GM12878 (cell line): ENCODE measurements at regions of chrX and their contacts with region 1.

Region 1: GRCh38 chrX:55160685-55161552 is 59.2 kb upstream of the PAGE5 start:
- DNase-seq: peak; percentile 64
- ATAC-seq: peak; percentile 96
- H3K4me3 ChIP-seq: peak overlapping the region; percentile 60
- H3K27ac ChIP-seq: peak overlapping the region; percentile 78
- H3K4me1 ChIP-seq: no peaks in the 10 kb centered on the region
- H3K27me3 ChIP-seq: no peaks in the 10 kb centered on the region
- CTCF ChIP-seq: peak; percentile 57 to 65 (median 63)
- EP300 ChIP-seq: no peak
- POLR2A ChIP-seq: peak; percentile 84
- RAD21 ChIP-seq: peak; percentile 66

Region 2: GRCh38 chrX:54999717-55000598 is 161.0 kb before region 1 on chrX and contains the start of gene APEX2:
- CTCF ChIA-PET with region 1: interaction called, 3 read pairs
- POLR2A ChIA-PET with region 1: no interaction called
- RAD21 ChIA-PET with region 1: no interaction called
- SMC1A ChIA-PET with region 1: no interaction called
- in situ Hi-C with region 1: no loop called
- intact Hi-C with region 1: loop called (anchors 5 kb)
- DNase-seq: peak; percentile 61
- ATAC-seq: peak; percentile 95
- H3K4me3 ChIP-seq: peak within 1 kb of the TSS; percentile 59
- H3K27ac ChIP-seq: peak within 1 kb of the TSS; percentile 95
- H3K4me1 ChIP-seq: no peaks in the 10 kb centered on the region; the same call in 1 of the 2 replicates
- H3K27me3 ChIP-seq: no peaks in the 10 kb centered on the region
- CTCF ChIP-seq: no peak
- EP300 ChIP-seq: no peak
- POLR2A ChIP-seq: peak; percentile 87
- RAD21 ChIP-seq: no peak
- polyA plus RNA-seq, gene APEX2: 18.9 to 20.4 TPM

Region 3: DNA sequence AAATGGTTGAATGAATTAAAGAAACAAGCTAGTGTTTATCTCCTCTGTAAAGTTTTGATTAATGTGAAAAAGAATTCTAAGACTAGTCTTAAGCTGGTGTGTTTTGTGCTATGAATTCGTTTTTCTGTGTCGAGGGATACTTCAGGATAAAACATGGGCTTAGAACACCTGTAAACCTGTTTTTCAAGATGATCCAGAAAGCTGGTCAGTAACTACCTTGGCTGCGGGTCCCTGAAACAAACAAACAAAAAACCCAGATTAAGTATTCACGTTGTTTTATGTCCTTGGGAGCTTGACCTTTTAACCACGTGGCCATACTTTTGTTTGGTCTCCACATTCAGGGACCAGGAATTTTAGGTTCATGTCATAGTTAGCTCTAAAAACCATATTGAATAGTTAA is 107.2 kb after region 1 on chrX:
- CTCF ChIA-PET with region 1: no interaction called
- POLR2A ChIA-PET with region 1: no interaction called
- RAD21 ChIA-PET with region 1: no interaction called
- SMC1A ChIA-PET with region 1: no interaction called
- in situ Hi-C with region 1: loop called (anchors 25 kb)
- intact Hi-C with region 1: no loop called
- DNase-seq: no peak
- ATAC-seq: no peak
- H3K4me3 ChIP-seq: no peak overlapping the region
- H3K27ac ChIP-seq: no peak overlapping the region
- H3K4me1 ChIP-seq: no peaks in the 10 kb centered on the region
- H3K27me3 ChIP-seq: no peaks in the 10 kb centered on the region
- CTCF ChIP-seq: no peak
- EP300 ChIP-seq: no peak
- POLR2A ChIP-seq: no peak
- RAD21 ChIP-seq: no peak

Region 4: DNA sequence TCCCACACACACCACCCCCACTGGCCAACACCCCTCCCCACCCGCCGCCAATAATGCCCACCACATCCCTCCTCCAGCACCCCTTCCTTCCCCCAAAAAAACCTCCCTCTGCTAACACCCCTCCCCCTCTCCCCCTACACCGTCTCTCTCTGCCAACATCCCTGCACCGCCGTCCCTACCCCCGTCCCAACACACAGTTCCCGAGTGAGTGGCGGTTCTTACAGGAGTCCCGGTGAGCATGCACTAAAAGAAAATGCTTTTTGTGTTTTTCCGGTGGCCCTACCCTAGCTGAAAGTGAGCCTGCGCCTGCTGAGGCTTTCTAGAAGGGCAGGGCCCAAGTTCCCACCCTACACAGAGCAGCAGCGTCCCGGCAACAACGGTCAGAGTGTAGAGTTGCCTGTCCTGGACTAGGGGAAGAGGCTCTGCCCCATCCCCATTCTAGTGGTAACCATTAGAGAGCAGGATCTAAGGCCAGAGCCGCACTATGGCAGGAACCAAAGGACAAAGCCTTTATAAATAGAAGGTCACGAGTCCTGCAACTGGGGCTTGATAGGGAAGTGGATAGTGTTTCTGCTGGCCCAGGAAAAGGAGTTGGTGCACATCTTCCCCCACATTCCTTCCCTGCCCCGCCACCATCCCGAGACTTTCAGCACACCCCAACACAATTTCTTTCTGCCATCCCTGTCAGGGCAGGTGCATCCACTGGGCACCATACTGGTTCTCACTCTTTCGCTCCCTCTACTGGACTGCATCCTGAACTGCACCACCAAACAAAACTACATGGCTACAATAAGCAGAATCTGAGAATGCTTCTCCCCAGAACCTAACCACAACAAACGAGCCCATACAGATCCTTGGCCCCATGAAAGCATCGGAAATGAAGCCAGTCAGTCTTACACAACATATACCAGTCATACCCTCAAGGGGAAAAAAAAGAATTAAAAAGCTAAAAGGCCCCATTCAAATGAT is 181.9 kb after region 1 on chrX:
- CTCF ChIA-PET with region 1: no interaction called
- POLR2A ChIA-PET with region 1: no interaction called
- RAD21 ChIA-PET with region 1: no interaction called
- SMC1A ChIA-PET with region 1: no interaction called
- in situ Hi-C with region 1: no loop called
- intact Hi-C with region 1: loop called (anchors 10 kb)
- DNase-seq: peak; percentile 21
- ATAC-seq: peak; percentile 95
- H3K4me3 ChIP-seq: no peak overlapping the region
- H3K27ac ChIP-seq: no peak overlapping the region
- H3K4me1 ChIP-seq: no peaks in the 10 kb centered on the region
- H3K27me3 ChIP-seq: no peaks in the 10 kb centered on the region
- CTCF ChIP-seq: peak; percentile 60 to 74 (median 72); a peak in 5 of 6 replicates
- EP300 ChIP-seq: no peak
- POLR2A ChIP-seq: no peak
- RAD21 ChIP-seq: peak; percentile 54

Region 5: DNA sequence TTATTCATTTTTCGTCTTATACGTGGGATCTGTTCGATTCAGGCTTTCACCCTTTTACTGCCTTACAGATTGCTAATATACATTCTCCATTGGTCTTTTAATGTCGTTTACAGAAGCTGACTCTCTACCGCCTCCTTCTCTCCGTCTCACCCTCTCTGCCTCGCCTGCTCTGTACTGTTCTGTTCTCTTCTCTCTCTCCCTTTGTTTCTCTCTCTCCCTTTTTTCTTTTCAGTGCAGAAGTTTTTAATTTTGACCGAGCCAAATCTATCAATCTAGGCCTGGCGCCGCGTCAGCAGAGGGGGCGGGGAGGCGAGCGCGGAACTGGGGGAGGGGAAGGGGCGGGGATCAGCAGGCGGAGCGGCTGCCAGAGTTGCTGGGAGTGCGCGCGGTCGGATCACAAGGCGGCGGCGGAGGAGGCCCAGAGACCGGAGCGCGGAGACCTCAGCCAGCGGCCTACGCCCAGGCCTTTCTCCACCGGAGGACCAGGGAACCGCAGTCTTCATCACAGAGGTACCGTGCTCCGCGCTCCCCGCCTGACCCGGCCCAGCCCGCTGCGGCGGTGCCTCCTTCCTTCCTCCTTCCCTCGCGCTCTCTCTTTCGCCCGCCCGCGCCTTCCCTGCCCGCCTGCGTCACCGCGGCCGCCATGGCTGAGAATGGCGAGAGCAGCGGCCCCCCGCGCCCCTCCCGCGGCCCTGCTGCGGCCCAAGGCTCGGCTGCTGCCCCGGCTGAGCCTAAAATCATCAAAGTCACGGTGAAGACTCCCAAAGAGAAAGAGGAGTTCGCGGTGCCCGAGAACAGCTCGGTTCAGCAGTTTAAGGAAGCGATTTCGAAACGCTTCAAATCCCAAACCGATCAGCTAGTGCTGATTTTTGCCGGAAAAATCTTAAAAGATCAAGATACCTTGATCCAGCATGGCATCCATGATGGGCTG is 1402.6 kb after region 1 on chrX and contains the start of gene UBQLN2:
- CTCF ChIA-PET with region 1: no interaction called
- POLR2A ChIA-PET with region 1: no interaction called
- RAD21 ChIA-PET with region 1: no interaction called
- SMC1A ChIA-PET with region 1: no interaction called
- in situ Hi-C with region 1: loop called (anchors 25 kb)
- intact Hi-C with region 1: no loop called
- DNase-seq: no peak
- ATAC-seq: peak; percentile 84
- H3K4me3 ChIP-seq: peak within 1 kb of the TSS; percentile 76
- H3K27ac ChIP-seq: peak within 1 kb of the TSS; percentile 77
- H3K4me1 ChIP-seq: no peaks in the 10 kb centered on the region
- H3K27me3 ChIP-seq: no peaks in the 10 kb centered on the region
- CTCF ChIP-seq: no peak
- EP300 ChIP-seq: no peak
- POLR2A ChIP-seq: peak; percentile 93
- RAD21 ChIP-seq: no peak
- polyA plus RNA-seq, gene UBQLN2: 2.4 to 6.2 TPM